ENCODE measurements at regions of chr3 and their contacts with region 1.

Region 1: DNA sequence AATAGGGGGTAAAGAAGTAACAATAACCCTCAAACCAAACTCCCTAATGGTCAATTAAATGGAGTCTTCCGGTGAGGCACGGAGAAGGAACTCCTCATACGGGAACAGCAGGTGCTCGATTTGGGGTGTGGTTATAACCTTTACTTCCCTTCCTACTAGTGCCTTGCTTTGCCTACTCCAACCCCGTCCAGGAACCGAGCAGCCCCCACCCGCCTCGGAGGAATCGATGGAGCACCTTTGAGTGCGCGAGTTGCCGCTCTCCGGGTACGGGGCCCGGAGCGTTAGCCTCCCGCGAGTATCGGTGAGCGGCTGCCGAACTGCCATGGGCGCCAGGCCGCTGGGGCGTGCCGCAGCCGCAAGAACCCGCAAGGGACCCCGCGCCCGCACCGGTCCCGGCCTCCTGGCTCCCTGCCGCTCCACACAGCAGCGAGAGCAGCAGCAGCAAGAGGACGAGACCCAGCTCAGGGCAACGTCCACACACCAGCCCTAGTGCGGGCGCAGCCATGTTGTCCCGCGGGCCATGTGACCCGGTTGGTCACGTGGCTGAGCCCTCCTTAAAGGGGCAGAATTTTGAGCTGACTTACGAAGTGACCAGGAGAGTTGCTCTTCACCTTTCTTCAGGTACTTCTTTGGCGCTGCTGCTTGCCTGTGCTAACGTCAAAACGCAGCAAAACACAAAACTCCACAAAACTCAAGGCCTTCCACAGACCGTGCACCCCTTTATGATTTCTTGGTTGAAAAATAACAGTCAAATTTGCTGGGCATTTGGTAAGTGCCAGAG is at the start of gene SUMF1:
- DNase-seq: peak; percentile 34 to 85 (median 73)
- ATAC-seq: peak; percentile 93
- H3K4me3 ChIP-seq: peak within 1 kb of the TSS; percentile 75 to 76
- H3K4me3 Mint-ChIP-seq: peak within 1 kb of the TSS; percentile 91
- H3K27ac ChIP-seq: peak within 1 kb of the TSS; percentile 68 to 72
- H3K27ac Mint-ChIP-seq: peak within 1 kb of the TSS; percentile 95
- H3K4me1 ChIP-seq: peaks cover 13% of the 10 kb centered on the region
- H3K4me1 Mint-ChIP-seq: peaks cover 23% of the 10 kb centered on the region
- H3K27me3 ChIP-seq: no peaks in the 10 kb centered on the region
- H3K27me3 Mint-ChIP-seq: no peaks in the 10 kb centered on the region
- CTCF ChIP-seq: no peak
- total RNA-seq, gene SUMF1: 7.6 to 7.8 TPM

Region 2: GRCh38 chr3:4218456-4219226 is 248.3 kb before region 1 on chr3:
- CTCF ChIA-PET with region 1: no interaction called
- POLR2A ChIA-PET with region 1: no interaction called
- intact Hi-C with region 1: no loop called
- DNase-seq: no peak
- ATAC-seq: no peak
- H3K4me3 ChIP-seq: no peak overlapping the region
- H3K4me3 Mint-ChIP-seq: no peak overlapping the region
- H3K27ac ChIP-seq: no peak overlapping the region
- H3K27ac Mint-ChIP-seq: no peak overlapping the region
- H3K4me1 ChIP-seq: no peaks in the 10 kb centered on the region
- H3K4me1 Mint-ChIP-seq: no peaks in the 10 kb centered on the region
- H3K27me3 ChIP-seq: no peaks in the 10 kb centered on the region
- H3K27me3 Mint-ChIP-seq: no peaks in the 10 kb centered on the region
- CTCF ChIP-seq: no peak

Region 3: DNA sequence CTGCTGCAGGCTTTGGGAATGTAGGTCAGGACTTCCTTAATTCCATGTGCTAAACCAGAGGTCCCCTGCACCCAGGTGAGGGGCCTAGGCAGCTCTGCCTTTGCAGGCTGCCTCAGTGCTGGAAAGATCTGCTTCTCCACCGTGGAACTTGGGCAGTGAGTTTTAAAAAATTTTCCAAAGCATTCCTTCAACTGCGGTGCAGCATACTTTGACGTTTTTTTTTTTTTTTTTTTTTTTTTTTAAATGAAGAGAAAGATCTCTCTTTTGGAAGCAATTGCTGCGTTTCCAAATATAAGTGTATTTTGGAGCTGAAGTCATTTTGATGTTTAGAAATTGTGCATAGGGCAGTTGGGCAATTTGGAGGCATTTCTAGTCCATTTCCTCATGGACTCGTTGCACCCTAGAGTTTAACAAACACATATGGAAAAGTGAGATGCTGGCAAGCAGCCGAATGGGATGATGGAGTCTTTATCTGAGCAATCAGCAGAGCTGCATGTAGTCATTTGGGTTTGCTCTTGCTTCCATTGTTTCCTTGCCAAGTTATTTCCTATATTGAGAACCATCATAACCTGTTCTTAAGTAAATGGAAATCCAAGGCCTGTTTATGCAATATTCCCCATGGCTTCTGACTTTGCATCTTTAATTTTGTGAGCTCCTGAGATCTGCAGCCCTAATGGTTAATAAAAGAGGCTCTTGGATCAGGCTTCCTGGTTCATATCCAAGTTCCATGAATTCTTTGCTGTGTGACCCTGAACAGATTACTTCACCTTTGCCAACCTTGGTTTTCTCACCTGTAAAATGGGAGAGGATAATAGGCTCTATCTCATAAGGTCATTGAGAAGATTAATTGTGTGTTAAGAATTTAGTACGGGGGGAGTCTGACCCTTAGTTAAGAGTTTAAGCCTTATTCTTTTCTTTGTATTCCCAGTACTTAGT is 57.4 kb after region 1 on chr3:
- CTCF ChIA-PET with region 1: interaction called, 5 read pairs
- POLR2A ChIA-PET with region 1: interaction called, 7 read pairs
- intact Hi-C with region 1: loop called (anchors 1 kb)
- DNase-seq: no peak
- ATAC-seq: no peak
- H3K4me3 ChIP-seq: no peak overlapping the region
- H3K4me3 Mint-ChIP-seq: no peak overlapping the region
- H3K27ac ChIP-seq: no peak overlapping the region
- H3K27ac Mint-ChIP-seq: no peak overlapping the region
- H3K4me1 ChIP-seq: peaks cover 5% of the 10 kb centered on the region
- H3K4me1 Mint-ChIP-seq: peaks cover 35% of the 10 kb centered on the region
- H3K27me3 ChIP-seq: no peaks in the 10 kb centered on the region
- H3K27me3 Mint-ChIP-seq: no peaks in the 10 kb centered on the region
- CTCF ChIP-seq: no peak

Region 4: DNA sequence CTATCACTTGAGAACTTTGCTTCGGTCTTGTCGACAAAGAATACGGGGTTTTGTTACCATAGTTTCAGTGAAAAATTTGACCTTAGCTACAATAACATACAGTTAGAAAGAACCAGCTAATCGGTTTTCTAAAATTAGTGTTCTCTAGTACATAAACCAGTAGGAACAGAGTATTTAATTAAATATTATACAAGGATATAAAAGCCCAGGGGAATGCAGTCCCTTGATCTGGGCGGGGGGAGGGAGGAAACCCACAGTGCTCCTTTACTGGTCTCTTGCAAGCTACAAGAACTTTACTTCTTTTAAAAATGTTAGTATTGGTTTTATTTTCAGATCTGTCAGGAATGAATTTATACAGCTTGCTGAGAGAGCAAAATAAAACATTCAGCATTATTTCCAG is 68.0 kb after region 1 on chr3:
- CTCF ChIA-PET with region 1: no interaction called
- POLR2A ChIA-PET with region 1: no interaction called
- intact Hi-C with region 1: no loop called
- DNase-seq: no peak
- ATAC-seq: no peak
- H3K4me3 ChIP-seq: no peak overlapping the region
- H3K4me3 Mint-ChIP-seq: no peak overlapping the region
- H3K27ac ChIP-seq: no peak overlapping the region
- H3K27ac Mint-ChIP-seq: no peak overlapping the region
- H3K4me1 ChIP-seq: no peaks in the 10 kb centered on the region
- H3K4me1 Mint-ChIP-seq: peaks cover 40% of the 10 kb centered on the region
- H3K27me3 ChIP-seq: no peaks in the 10 kb centered on the region
- H3K27me3 Mint-ChIP-seq: no peaks in the 10 kb centered on the region
- CTCF ChIP-seq: no peak

Region 5: GRCh38 chr3:4838621-4839022 is 371.7 kb after region 1 on chr3:
- CTCF ChIA-PET with region 1: no interaction called
- POLR2A ChIA-PET with region 1: no interaction called
- intact Hi-C with region 1: no loop called
- DNase-seq: no peak
- ATAC-seq: no peak
- H3K4me3 ChIP-seq: no peak overlapping the region
- H3K4me3 Mint-ChIP-seq: no peak overlapping the region
- H3K27ac ChIP-seq: no peak overlapping the region
- H3K27ac Mint-ChIP-seq: no peak overlapping the region
- H3K4me1 ChIP-seq: peaks cover 63% of the 10 kb centered on the region
- H3K4me1 Mint-ChIP-seq: peaks cover 72% of the 10 kb centered on the region
- H3K27me3 ChIP-seq: no peaks in the 10 kb centered on the region
- H3K27me3 Mint-ChIP-seq: no peaks in the 10 kb centered on the region
- CTCF ChIP-seq: no peak

Region 6: GRCh38 chr3:4994823-4995499 is 528.0 kb after region 1 on chr3:
- CTCF ChIA-PET with region 1: no interaction called
- POLR2A ChIA-PET with region 1: no interaction called
- intact Hi-C with region 1: no loop called
- DNase-seq: peak in 1 of 9 experiments; percentile 37
- ATAC-seq: no peak
- H3K4me3 ChIP-seq: no peak overlapping the region
- H3K4me3 Mint-ChIP-seq: no peak overlapping the region
- H3K27ac ChIP-seq: no peak overlapping the region
- H3K27ac Mint-ChIP-seq: no peak overlapping the region
- H3K4me1 ChIP-seq: no peaks in the 10 kb centered on the region
- H3K4me1 Mint-ChIP-seq: peaks cover 2% of the 10 kb centered on the region
- H3K27me3 ChIP-seq: no peaks in the 10 kb centered on the region
- H3K27me3 Mint-ChIP-seq: no peaks in the 10 kb centered on the region
- CTCF ChIP-seq: no peak

Region 7: DNA sequence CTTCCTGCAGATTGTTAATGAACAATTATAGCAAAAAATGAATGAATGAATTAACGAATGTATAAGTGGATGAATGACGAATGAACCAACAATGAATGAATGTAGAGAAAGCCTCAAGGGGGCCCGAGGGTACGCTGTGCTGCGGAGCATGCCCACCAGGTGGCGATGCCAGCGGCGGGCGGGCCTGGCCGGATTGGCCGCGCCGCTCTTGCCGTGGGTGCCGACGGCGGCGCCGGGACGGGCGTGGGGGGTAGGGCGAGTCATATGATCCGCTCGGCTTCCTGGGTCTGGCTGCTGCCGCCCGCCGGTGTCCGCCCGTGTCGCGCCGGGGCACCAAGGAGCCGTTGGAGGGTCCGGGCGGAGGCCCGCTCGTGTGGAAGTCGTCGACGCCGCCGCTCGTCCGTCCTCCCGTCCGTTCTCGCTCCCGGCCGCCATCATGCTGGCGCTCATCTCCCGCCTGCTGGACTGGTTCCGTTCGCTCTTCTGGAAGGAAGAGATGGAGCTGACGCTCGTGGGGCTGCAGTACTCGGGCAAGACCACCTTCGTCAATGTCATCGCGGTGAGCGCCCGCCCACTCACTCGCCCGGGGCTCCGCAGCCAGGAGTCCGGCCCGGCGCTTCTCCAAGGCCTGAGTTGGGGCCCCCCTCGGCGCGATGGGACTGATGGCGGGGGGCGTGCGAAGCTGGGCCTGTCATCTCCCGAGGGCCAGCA is 655.3 kb after region 1 on chr3 and contains the start of gene ARL8B:
- CTCF ChIA-PET with region 1: no interaction called
- POLR2A ChIA-PET with region 1: no interaction called
- intact Hi-C with region 1: loop called in 1 of 2 experiments (anchors 5 kb)
- DNase-seq: peak; percentile 80 to 95 (median 91)
- ATAC-seq: peak; percentile 98
- H3K4me3 ChIP-seq: peak within 1 kb of the TSS; percentile 91 to 98
- H3K4me3 Mint-ChIP-seq: peak within 1 kb of the TSS; percentile 81
- H3K27ac ChIP-seq: peak within 1 kb of the TSS; percentile 87 to 92
- H3K27ac Mint-ChIP-seq: peak within 1 kb of the TSS; percentile 81
- H3K4me1 ChIP-seq: peaks cover 31% of the 10 kb centered on the region
- H3K4me1 Mint-ChIP-seq: peaks cover 38% of the 10 kb centered on the region
- H3K27me3 ChIP-seq: no peaks in the 10 kb centered on the region
- H3K27me3 Mint-ChIP-seq: no peaks in the 10 kb centered on the region
- CTCF ChIP-seq: peak; percentile 92
- total RNA-seq, gene ARL8B: 54.1 to 61.7 TPM

Region 8: DNA sequence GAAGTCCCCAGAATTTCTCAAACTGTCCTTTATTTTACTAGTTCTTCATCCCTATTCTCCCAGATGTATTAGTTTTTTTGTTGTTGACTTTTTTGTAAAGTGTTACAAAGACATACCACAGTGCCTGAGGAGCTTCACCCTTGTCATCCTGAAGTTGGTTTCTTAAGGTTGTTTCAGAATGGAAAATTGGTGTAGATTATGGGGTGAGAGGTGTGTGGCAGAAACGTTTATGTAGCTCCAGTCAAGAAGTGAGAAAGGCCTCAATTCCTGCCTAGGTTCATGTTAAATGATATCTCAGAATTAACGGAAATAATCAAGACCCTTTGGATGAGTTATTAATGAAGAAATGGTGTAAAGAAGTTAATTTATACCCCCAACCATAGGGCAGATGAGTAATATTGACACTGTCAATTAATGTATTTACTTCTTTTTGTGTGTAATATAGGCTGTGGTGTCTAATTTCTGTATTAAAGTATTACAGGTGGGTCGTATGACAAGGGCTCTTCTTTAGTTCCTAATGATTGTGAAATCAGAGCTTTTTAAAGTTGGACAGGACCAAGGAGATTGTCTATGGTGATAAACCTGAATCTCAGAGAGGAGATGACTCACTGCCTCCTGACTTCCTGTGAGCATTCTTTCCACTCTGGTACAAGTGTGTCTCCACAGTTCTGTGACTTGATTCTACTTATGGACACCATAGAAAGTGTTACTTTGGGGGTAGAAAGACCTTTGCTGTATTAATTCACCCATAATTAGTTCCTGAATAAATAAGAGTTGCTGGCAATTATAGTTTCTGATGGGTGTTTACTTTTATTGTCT is 727.6 kb after region 1 on chr3:
- CTCF ChIA-PET with region 1: no interaction called
- POLR2A ChIA-PET with region 1: no interaction called
- intact Hi-C with region 1: loop called in 1 of 2 experiments (anchors 10 kb)
- DNase-seq: peak in 5 of 9 experiments; percentile 34 to 81 (median 51)
- ATAC-seq: peak; percentile 56
- H3K4me3 ChIP-seq: no peak overlapping the region
- H3K4me3 Mint-ChIP-seq: peak overlapping the region; percentile 1
- H3K27ac ChIP-seq: peak overlapping the region in 1 of 2 experiments; percentile 65
- H3K27ac Mint-ChIP-seq: peak overlapping the region; percentile 85
- H3K4me1 ChIP-seq: peaks cover 90% of the 10 kb centered on the region
- H3K4me1 Mint-ChIP-seq: peaks cover 86% of the 10 kb centered on the region
- H3K27me3 ChIP-seq: no peaks in the 10 kb centered on the region
- H3K27me3 Mint-ChIP-seq: no peaks in the 10 kb centered on the region
- CTCF ChIP-seq: no peak

Measured in CD8-positive, alpha-beta T cell (primary cell).